ENCODE measurements at regions of chr11 and their contacts with region 1.

Region 1: GRCh38 chr11:73393479-73394380 is 17.5 kb downstream of the RELT start:
- DNase-seq: peak; percentile 52
- H3K4me3 Mint-ChIP-seq: no peak overlapping the region
- H3K27ac Mint-ChIP-seq: no peak overlapping the region
- H3K4me1 Mint-ChIP-seq: peaks cover 2% of the 10 kb centered on the region
- H3K27me3 Mint-ChIP-seq: no peaks in the 10 kb centered on the region

Region 2: GRCh38 chr11:73307323-73308002 is 86.3 kb before region 1 on chr11:
- intact Hi-C with region 1: loop called (anchors 5 kb)
- DNase-seq: peak; percentile 80
- H3K4me3 Mint-ChIP-seq: peak overlapping the region; percentile 86
- H3K27ac Mint-ChIP-seq: no peak overlapping the region
- H3K4me1 Mint-ChIP-seq: peaks cover 6% of the 10 kb centered on the region
- H3K27me3 Mint-ChIP-seq: peaks cover 47% of the 10 kb centered on the region

Region 3: DNA sequence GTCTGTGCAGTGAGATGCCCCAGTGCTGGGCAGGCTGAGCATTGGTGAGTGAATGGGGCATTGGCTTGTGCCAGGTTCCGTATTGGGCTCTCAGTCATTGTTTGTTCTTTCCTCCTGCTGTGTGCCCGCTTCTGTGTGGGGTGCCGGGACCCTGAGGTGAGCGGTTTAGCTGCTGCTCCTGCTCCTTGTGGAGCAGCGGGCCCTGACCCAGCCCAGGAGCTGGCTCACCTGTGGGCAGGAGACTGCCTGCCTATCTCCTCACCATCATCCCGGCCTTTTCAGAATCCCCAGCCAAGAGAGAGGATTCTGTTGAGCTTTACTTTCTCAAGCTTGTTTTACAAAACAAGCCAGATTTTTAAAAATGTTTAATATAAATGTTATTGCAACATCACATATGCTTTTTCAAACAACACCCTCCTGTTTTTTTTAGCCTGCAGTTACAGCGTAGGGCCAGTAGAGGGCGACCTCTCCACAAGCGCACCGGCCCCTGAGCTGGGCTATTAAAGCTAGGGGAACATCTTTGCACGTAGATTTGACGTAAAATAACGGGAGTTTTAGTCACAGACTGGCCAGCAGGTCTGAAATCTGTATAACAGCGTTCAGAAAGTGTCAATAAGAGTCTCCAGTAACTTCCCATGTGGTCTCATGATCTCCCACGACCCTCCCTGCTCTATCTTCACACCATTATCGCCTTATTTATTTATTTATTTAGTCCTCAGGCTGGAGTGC is 42.7 kb before region 1 on chr11:
- intact Hi-C with region 1: loop called (anchors 1 kb)
- DNase-seq: peak; percentile 60
- H3K4me3 Mint-ChIP-seq: no peak overlapping the region
- H3K27ac Mint-ChIP-seq: no peak overlapping the region
- H3K4me1 Mint-ChIP-seq: peaks cover 35% of the 10 kb centered on the region
- H3K27me3 Mint-ChIP-seq: peaks cover 4% of the 10 kb centered on the region

Measured in activated T-helper 2 cell treated with anti-CD3 and anti-CD28 coated beads, Interferon-gamma antibody, Interleukin-2, Interleukin-4, amounts not matched to agents 10 μg/mL and 5 μg/mL and 100 μg/mL, durations not matched to agents 14 hours and 24 hours and 36 hours (primary cell).